GM12878 (cell line): ENCODE measurements at regions of chr16 and their contacts with region 1.

Region 1: DNA sequence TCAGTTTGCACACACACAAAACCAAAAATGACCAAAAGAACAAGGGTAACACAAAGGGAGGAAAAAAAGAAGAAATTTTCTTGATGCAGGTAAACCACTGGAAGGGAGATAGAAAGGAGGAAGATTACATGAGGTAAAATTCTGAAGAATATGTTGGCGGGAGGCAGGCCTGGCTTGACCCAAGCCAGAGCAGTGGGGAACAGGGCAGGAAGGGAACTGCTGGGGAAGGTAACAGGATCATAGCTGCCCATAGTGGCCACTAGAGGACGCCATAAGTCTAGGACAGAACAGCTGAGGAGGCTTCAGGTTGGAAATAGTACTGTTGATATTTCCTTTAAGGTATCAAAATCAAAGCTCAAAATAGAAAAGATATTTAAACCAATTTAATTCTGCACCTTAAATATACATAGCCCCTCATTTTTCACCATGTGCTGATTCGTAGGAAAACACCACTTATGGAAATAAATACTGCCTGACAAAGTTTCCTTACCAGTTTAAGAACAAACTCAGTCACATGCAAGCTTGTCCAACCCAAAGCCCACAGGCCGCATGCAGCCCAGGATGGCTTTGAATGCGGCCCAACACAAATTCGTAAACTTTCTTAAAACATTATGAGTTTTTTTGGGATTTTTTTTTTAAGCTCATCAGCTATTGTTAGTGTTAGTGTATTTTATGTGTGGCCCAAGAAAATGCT is 15.5 kb downstream of the VPS35 start:
- DNase-seq: peak; percentile 27
- ATAC-seq: peak; percentile 99
- H3K4me3 ChIP-seq: no peak overlapping the region
- H3K27ac ChIP-seq: no peak overlapping the region
- H3K4me1 ChIP-seq: no peaks in the 10 kb centered on the region
- H3K27me3 ChIP-seq: no peaks in the 10 kb centered on the region
- CTCF ChIP-seq: peak; percentile 97 to 99 (median 97); a peak in 5 of 6 replicates
- EP300 ChIP-seq: no peak
- POLR2A ChIP-seq: no peak
- RAD21 ChIP-seq: peak; percentile 95

Region 2: DNA sequence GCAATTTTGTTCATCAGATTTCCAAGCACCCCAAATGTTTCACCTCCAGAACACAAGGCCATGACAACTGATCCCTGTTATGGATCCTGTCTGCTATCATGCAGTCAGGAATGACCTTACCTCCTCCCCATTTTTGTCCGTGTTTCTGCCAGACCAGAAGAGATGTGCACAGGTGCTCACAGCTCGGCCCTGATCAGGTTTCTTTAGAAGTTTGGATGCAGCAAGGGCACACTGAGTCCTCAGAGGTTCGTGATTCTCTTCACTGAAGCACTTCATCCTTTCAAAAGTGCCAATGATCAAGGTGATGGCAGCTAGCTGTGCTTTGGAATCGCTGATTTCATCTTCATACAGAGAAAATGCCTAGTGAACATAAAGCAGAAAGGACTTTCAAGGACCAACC is 11.3 kb before region 1 on chr16:
- CTCF ChIA-PET with region 1: interaction called, 16 read pairs
- POLR2A ChIA-PET with region 1: no interaction called
- RAD21 ChIA-PET with region 1: interaction called, 3 read pairs
- SMC1A ChIA-PET with region 1: interaction called, 7 read pairs
- in situ Hi-C with region 1: no loop called
- intact Hi-C with region 1: no loop called
- DNase-seq: no peak
- ATAC-seq: no peak
- H3K4me3 ChIP-seq: no peak overlapping the region
- H3K27ac ChIP-seq: no peak overlapping the region
- H3K4me1 ChIP-seq: peaks cover 20% of the 10 kb centered on the region
- H3K27me3 ChIP-seq: no peaks in the 10 kb centered on the region
- CTCF ChIP-seq: no peak
- EP300 ChIP-seq: no peak
- POLR2A ChIP-seq: no peak
- RAD21 ChIP-seq: no peak

Region 3: DNA sequence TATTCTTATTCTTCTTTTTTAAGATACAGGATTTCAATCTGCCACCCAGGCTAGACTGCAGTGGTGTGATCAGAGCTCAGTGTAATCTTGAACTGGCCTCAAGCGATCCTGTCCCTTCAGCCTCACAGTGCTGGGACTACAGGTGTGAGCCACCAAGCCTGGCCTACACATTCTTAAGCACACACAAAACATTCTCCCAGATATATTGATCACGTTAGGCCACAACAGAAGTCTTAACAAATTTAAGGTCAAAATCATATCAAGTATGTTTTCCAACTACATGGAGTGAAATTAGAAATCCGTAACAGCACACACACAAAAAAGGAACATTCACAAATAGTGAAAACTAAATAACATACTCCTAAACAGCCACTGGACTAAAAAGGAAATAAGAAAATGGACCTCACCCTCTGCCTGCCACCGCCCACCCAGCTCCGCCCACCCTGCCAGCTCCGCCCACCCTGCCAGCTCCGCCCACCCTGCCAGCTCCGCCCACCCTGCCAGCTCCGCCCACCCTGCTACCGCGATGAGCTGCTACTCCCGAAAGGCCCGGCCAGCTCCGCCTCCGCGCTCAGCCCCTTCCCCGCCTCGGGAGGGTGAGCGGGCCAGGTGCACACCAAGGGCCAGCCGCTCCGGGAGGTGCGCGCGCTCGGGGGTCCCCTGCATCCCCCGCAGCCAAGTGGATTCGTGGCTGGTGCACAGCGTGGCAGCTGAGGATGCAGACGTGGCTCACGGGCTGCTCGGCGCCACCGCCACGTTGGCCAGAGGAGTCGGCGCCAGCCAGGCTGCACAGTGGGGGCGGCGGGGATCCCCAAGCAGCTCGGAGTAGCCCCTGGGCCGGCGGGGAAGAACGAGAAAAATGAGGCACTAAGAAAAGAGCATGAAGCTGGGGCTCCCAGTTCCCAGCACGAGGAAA is 116.3 kb after region 1 on chr16:
- CTCF ChIA-PET with region 1: interaction called, 14 read pairs
- POLR2A ChIA-PET with region 1: interaction called, 4 read pairs
- RAD21 ChIA-PET with region 1: interaction called, 10 read pairs
- SMC1A ChIA-PET with region 1: interaction called, 7 read pairs
- in situ Hi-C with region 1: no loop called
- intact Hi-C with region 1: no loop called
- DNase-seq: peak; percentile 57
- ATAC-seq: peak; percentile 93
- H3K4me3 ChIP-seq: peak overlapping the region; percentile 73
- H3K27ac ChIP-seq: peak overlapping the region; percentile 91
- H3K4me1 ChIP-seq: peaks cover 43% of the 10 kb centered on the region
- H3K27me3 ChIP-seq: no peaks in the 10 kb centered on the region
- CTCF ChIP-seq: no peak
- EP300 ChIP-seq: no peak
- POLR2A ChIP-seq: peak; percentile 96
- RAD21 ChIP-seq: no peak

Region 4: DNA sequence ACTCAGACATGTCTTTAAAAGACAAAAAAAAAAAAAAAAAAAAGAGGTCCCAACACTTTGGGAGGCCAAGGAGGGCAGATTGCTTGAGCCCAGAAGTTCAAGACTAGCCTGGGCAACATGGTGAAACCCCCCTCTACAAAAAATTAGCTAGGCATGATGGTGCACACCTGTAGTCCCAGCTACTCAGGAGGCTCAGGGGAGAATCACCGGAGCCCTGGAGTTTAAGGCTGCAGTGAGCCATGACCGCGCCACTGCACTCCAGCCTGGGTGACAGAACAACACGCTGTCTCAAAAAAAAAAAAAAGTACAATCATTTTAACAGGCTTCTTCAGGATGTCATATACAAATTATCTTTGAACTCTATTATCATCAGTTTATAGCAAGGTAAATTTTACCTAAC is 135.5 kb after region 1 on chr16:
- CTCF ChIA-PET with region 1: interaction called, 11 read pairs
- POLR2A ChIA-PET with region 1: no interaction called
- RAD21 ChIA-PET with region 1: interaction called, 4 read pairs
- SMC1A ChIA-PET with region 1: interaction called, 5 read pairs
- in situ Hi-C with region 1: no loop called
- intact Hi-C with region 1: no loop called
- DNase-seq: no peak
- ATAC-seq: peak; percentile 76
- H3K4me3 ChIP-seq: 0 out of 2 replicates have a peak overlapping the region, but pooled peaks have one; percentile 33
- H3K27ac ChIP-seq: no peak overlapping the region
- H3K4me1 ChIP-seq: peaks cover 22% of the 10 kb centered on the region
- H3K27me3 ChIP-seq: no peaks in the 10 kb centered on the region
- CTCF ChIP-seq: no peak
- EP300 ChIP-seq: no peak
- POLR2A ChIP-seq: no peak
- RAD21 ChIP-seq: no peak

Region 5: DNA sequence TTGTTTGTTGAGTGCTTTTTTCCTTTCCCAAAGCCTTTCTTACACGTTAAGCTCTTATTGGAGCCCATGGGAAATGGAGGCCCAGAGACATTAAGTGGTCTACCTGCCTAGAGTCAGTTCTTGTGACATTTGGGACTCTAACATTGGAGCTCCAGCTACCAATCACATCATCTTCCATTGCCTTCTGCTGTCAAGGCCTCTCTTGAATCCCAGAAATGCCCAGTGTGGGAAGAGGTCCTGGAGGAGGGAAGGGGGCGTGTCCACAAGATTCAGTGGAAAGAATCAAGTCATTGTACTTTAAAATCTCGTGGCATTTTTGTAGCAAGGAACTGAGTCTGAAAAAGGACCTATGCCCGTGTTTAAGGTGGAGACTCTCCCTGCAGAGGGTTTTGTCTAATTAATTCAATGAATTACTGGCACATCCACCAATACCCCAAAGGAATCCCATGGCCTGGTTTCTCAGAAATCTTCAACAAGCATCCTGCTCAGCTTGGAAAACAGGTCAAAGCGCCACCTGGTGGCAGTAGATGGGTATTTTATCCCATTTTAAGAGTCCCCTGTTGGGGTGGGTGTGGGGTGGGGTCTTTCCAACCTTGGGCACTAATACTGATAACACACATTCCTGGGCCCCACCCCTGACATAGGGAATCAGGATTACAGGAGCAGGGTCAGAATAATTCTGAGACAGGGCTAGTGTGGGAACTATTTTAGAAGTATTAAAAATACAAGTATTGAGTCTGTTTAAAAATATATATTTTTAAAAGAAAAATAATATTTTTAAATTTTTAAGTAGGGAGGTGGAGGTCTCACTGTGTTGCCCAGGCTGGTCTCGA is 235.3 kb after region 1 on chr16:
- CTCF ChIA-PET with region 1: interaction called, 73 read pairs
- POLR2A ChIA-PET with region 1: no interaction called
- RAD21 ChIA-PET with region 1: interaction called, 8 read pairs
- SMC1A ChIA-PET with region 1: interaction called, 45 read pairs
- in situ Hi-C with region 1: no loop called
- intact Hi-C with region 1: loop called (anchors 1 kb)
- DNase-seq: no peak
- ATAC-seq: peak; percentile 70
- H3K4me3 ChIP-seq: no peak overlapping the region
- H3K27ac ChIP-seq: no peak overlapping the region
- H3K4me1 ChIP-seq: peaks cover 22% of the 10 kb centered on the region
- H3K27me3 ChIP-seq: no peaks in the 10 kb centered on the region
- CTCF ChIP-seq: peak; percentile 58 to 67 (median 64)
- EP300 ChIP-seq: no peak
- POLR2A ChIP-seq: no peak
- RAD21 ChIP-seq: peak; percentile 76

Region 6: DNA sequence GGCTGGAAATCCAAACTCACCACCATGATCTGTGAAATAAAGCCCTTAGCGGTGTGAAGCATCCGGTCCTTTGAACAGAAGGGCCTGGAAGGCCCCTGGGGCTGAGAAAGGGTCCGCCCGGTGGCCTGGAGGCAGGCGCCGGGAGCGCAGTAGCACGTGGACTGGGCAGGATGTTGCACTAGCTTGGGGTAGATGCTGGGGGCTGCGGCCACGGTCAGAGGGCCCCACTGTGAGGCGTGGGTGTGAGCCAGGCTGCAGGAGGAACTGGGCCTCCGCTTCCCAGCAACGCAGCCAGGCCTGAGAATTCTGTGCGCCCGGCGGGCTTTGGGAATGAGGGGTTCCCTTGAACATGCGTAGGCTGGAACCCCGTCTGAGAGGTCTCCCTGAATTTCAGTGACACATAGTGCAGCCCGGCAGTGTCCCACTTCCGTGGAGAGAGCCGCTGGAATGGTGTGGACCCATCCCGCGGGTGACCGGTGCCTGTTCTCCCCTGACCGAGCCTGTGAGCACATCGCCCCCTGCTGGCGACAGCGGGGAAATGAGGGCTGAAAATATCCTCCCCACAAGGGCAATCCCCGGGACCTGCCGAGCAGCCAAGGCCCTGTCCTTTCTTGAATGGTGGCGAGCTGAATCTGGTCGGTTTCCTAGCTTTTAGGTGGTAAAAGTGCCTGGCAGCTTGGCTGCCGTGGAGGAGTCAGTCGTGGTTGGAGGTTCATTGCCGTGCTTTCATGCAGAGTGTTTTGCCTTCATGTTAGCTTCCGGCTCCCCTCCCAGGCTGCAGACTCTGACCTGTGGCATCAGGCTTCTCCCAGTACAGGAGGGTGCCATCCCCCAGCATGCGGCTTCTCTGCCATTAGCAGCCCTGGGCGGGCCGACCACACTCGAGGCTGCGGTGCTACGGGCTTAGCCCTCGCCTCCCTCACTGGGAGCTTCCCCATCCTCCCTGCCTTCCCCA is 256.2 kb after region 1 on chr16:
- CTCF ChIA-PET with region 1: interaction called, 30 read pairs
- POLR2A ChIA-PET with region 1: no interaction called
- RAD21 ChIA-PET with region 1: interaction called, 9 read pairs
- SMC1A ChIA-PET with region 1: interaction called, 8 read pairs
- in situ Hi-C with region 1: loop called (anchors 5 kb)
- intact Hi-C with region 1: no loop called
- DNase-seq: no peak
- ATAC-seq: peak; percentile 97
- H3K4me3 ChIP-seq: no peak overlapping the region
- H3K27ac ChIP-seq: no peak overlapping the region
- H3K4me1 ChIP-seq: no peaks in the 10 kb centered on the region
- H3K27me3 ChIP-seq: no peaks in the 10 kb centered on the region
- CTCF ChIP-seq: peak; percentile 88 to 91 (median 91)
- EP300 ChIP-seq: no peak
- POLR2A ChIP-seq: no peak
- RAD21 ChIP-seq: peak; percentile 81